ENCODE measurements at regions of chr5 and their contacts with region 1.

Region 1: GRCh38 chr5:169583424-169584204 is at the start of gene SPDL1:
- DNase-seq: peak; percentile 83 to 97
- H3K4me3 ChIP-seq: peak within 1 kb of the TSS; percentile 51 to 97
- H3K27ac ChIP-seq: peak within 1 kb of the TSS; percentile 54 to 74
- H3K4me1 ChIP-seq: no peaks in the 10 kb centered on the region
- H3K27me3 ChIP-seq: no peaks in the 10 kb centered on the region
- CTCF ChIP-seq: no peak
- total RNA-seq, gene SPDL1: 5.5 TPM

Region 2: GRCh38 chr5:168422431-168422830 is 1161.2 kb before region 1 on chr5:
- intact Hi-C with region 1: no loop called
- DNase-seq: no peak
- H3K4me3 ChIP-seq: no peak overlapping the region
- H3K27ac ChIP-seq: no peak overlapping the region
- H3K4me1 ChIP-seq: no peaks in the 10 kb centered on the region
- H3K27me3 ChIP-seq: no peaks in the 10 kb centered on the region
- CTCF ChIP-seq: no peak

Region 3: DNA sequence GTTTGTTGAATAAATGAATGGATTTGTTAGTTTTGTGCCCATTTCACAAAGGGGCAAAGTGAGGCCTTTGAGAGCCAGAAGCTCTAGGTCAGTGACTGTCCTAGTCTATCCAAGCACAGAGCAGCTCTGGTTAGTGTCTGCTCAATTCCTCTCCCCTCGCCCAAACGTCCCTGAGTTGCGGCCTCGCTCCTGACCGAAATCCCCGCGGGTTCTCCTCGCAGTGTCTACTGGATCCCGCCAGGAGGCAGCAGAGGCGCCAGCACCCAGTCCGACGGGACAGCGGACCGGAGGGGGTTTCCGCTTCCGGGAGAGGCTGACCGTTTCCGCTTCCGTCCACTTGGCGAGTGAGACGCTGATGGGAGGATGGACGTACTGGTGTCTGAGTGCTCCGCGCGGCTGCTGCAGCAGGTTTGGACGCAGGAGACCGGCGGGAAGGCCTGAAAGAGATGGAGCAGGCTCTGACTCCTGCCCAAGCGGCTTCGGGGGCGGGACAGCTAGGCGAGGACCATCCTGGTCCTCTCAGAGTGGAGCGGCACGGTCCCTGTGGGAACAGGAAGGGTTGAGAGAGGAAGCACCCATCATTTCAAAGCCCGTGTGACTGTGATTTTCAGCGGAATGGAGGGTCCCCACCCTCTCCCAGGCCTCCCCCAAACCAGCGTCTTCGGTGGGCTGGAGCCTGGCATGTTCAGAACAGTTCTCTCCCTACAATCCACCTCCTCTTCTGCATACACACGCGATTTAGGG is 1097.3 kb before region 1 on chr5 and contains the start of gene RARS1:
- intact Hi-C with region 1: loop called (anchors 2 kb)
- DNase-seq: peak; percentile 57 to 95
- H3K4me3 ChIP-seq: peak within 1 kb of the TSS; percentile 89 to 91
- H3K27ac ChIP-seq: peak within 1 kb of the TSS; percentile 78 to 81
- H3K4me1 ChIP-seq: peaks cover 3 to 9% of the 10 kb centered on the region in 2 donors
- H3K27me3 ChIP-seq: no peaks in the 10 kb centered on the region
- CTCF ChIP-seq: peak; percentile 91 to 98 (median 97)
- total RNA-seq, gene RARS1: 24.5 TPM

Region 4: DNA sequence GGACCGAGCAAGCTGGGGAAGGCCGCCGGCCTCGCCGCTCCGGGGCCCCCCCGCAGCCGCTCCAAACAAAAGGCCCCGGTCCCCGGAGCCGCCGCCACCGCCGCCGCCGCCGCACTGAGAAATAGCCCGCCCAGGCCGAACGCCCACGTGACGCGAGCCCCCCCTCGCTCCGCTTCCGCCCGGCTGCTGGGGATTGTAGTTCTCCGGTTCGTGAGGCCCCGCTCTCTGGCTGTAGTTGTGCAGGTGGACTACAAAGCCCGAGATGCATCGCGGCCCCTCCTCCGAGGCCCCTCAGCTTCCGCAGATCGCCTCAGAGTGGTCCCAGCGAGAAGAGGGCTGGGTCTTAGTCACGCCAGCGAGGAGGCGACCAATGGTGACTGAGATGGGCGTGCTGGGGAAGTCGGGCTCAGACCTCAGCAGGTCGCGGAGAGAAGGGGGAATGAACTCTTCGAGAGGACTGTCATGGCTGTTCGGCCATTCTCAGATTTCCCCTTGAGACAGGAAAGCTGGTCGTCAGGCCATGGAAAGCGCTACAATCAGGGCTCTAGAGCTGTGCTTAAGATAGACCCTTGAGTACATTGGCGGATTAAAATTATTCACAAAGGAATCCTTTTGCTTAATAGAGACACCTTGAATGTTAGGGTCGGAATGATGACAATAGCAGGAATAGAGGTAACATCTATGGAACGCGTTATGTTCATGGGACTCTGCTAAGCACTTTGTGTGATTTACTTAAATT is 1004.0 kb before region 1 on chr5:
- intact Hi-C with region 1: loop called (anchors 2 kb)
- DNase-seq: peak; percentile 97 to 99
- H3K4me3 ChIP-seq: peak overlapping the region; percentile 81 to 85
- H3K27ac ChIP-seq: peak overlapping the region; percentile 95 to 98
- H3K4me1 ChIP-seq: peaks cover 4 to 14% of the 10 kb centered on the region in 2 donors
- H3K27me3 ChIP-seq: no peaks in the 10 kb centered on the region
- CTCF ChIP-seq: no peak

Region 5: GRCh38 chr5:168679515-168679920 is 904.1 kb before region 1 on chr5:
- intact Hi-C with region 1: loop called (anchors 2 kb)
- DNase-seq: peak in 1 of 2 donors; percentile 83
- H3K4me3 ChIP-seq: no peak overlapping the region
- H3K27ac ChIP-seq: no peak overlapping the region
- H3K4me1 ChIP-seq: peaks cover 0 to 3% of the 10 kb centered on the region in 2 donors
- H3K27me3 ChIP-seq: no peaks in the 10 kb centered on the region
- CTCF ChIP-seq: peak; percentile 68 to 94 (median 83)

Region 6: GRCh38 chr5:168987543-168988300 is 595.9 kb before region 1 on chr5:
- intact Hi-C with region 1: loop called (anchors 2 kb)
- DNase-seq: peak in 1 of 2 donors; percentile 86
- H3K4me3 ChIP-seq: peak overlapping the region in 1 of 2 donors; percentile 25
- H3K27ac ChIP-seq: no peak overlapping the region
- H3K4me1 ChIP-seq: peaks cover 3 to 12% of the 10 kb centered on the region in 2 donors
- H3K27me3 ChIP-seq: no peaks in the 10 kb centered on the region
- CTCF ChIP-seq: peak; percentile 78 to 94 (median 88)

Region 7: DNA sequence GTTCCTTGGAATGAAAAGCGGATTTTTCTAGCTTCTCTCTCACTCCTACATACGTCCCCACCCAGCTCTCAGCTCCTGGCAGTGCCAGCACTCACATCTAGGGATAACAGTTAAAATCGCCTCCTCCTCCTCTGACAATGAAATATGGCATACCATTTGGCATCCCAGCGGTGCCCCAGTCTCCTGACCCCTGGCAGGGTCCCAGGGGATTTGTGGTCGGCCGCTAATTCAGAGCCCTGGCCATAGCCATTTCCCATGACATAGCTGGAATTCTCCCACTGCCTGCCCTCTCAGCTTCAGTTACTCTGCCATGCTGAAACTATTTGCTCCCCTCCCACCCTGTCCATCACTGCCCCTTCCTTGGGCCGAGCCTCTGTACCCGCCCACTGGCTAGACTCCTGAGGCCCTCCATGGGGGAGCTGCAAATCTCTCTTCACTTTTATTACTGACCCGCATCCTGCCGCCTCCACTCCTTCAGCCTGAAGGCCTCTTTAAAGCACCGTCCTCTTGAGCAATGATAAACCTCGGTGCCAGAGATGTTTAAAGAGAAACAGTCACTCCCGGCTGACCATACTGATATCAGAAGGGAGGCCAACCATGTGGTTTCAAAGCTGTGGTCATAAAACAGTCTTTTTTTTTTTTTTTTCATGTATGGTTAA is 422.5 kb before region 1 on chr5:
- intact Hi-C with region 1: loop called (anchors 5 kb)
- DNase-seq: peak in 1 of 2 donors; percentile 82
- H3K4me3 ChIP-seq: peak overlapping the region; percentile 19 to 24
- H3K27ac ChIP-seq: peak overlapping the region; percentile 88 to 89
- H3K4me1 ChIP-seq: peaks cover 2 to 21% of the 10 kb centered on the region in 2 donors
- H3K27me3 ChIP-seq: no peaks in the 10 kb centered on the region
- CTCF ChIP-seq: no peak

Region 8: DNA sequence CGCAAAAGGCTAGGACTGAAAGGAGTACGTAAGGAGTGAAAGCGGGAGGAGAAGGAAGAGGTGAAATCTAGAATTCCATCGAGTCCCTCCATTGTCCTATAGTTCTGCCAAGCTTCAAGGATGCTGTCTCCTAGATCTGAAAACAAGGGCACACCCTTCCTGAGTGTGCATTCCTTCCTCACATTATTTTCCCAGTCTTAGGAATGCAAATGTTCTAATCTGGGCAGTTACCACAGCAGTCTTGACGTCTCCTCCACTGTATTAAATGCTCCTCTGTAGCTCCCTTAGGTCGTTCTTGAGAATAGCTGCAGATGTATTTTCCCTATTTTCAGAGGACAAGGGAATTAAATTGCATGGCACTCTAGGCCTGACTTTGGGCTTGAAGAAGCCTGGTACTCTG is 410.2 kb before region 1 on chr5:
- intact Hi-C with region 1: no loop called
- DNase-seq: no peak
- H3K4me3 ChIP-seq: no peak overlapping the region
- H3K27ac ChIP-seq: no peak overlapping the region
- H3K4me1 ChIP-seq: peaks cover 0 to 5% of the 10 kb centered on the region in 2 donors
- H3K27me3 ChIP-seq: no peaks in the 10 kb centered on the region
- CTCF ChIP-seq: no peak